K562 (cell line): ENCODE measurements at regions of chr11 and their contacts with region 1.

Region 1: GRCh38 chr11:60130496-60130895 is 42.0 kb downstream of the MS4A2 start:
- DNase-seq: peak; percentile 34 to 84 (median 53)
- ATAC-seq: peak; percentile 98
- H3K4me3 ChIP-seq: no peak overlapping the region
- H3K27ac ChIP-seq: no peak overlapping the region
- H3K4me1 ChIP-seq: peaks cover 0 to 12% of the 10 kb centered on the region in 2 experiments; a peak in 2 of 5 replicates
- H3K27me3 ChIP-seq: no peaks in the 10 kb centered on the region
- CTCF ChIP-seq: peak; percentile 67 to 76 (median 69)
- EP300 ChIP-seq: no peak; the same call in 1 of the 2 replicates
- POLR2A ChIP-seq: no peak
- RAD21 ChIP-seq: peak; percentile 97 to 99

Region 2: DNA sequence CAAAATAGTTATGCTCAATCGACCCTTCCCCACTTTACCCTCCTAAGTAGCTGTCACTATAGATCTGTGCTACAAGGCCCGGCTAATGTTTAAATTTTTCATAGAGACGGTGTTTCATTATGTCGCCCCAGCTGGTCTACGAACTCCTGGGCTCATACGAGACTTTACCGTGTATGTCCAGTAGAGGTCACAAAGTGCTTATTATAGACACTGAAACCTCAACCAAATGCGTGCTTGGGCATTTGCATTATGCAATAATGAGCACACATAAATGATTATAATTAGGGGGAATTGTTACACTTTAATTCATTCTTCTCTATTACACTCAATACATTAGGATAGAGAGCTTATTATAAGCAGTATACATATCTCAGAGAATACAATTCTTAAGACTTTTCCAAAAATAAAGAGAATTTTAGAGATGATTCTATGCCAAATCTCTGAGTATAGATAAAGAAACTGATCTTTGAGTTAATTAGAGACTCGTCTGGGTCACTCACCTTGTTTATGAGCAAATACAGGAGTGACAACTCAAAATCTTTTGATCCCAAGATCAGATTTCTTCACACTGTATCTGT is 307.4 kb before region 1 on chr11:
- CTCF ChIA-PET with region 1: interaction called, 16 read pairs
- POLR2A ChIA-PET with region 1: no interaction called
- in situ Hi-C with region 1: loop called (anchors 5 kb)
- intact Hi-C with region 1: loop called (anchors 1 kb)
- DNase-seq: peak; percentile 42 to 86 (median 52)
- ATAC-seq: peak; percentile 96
- H3K4me3 ChIP-seq: no peak overlapping the region
- H3K27ac ChIP-seq: no peak overlapping the region; the same call in 2 of the 3 replicates
- H3K4me1 ChIP-seq: peaks cover 0 to 2% of the 10 kb centered on the region in 2 experiments; a peak in 2 of 5 replicates
- H3K27me3 ChIP-seq: no peaks in the 10 kb centered on the region
- CTCF ChIP-seq: peak; percentile 78 to 87 (median 81)
- EP300 ChIP-seq: no peak
- POLR2A ChIP-seq: no peak
- RAD21 ChIP-seq: peak; percentile 96 to 98

Region 3: GRCh38 chr11:59918987-59919589 is 211.4 kb before region 1 on chr11:
- CTCF ChIA-PET with region 1: no interaction called
- POLR2A ChIA-PET with region 1: no interaction called
- in situ Hi-C with region 1: no loop called
- intact Hi-C with region 1: loop called (anchors 1 kb)
- DNase-seq: peak; percentile 34 to 74 (median 42)
- ATAC-seq: peak; percentile 71
- H3K4me3 ChIP-seq: no peak overlapping the region
- H3K27ac ChIP-seq: no peak overlapping the region
- H3K4me1 ChIP-seq: no peaks in the 10 kb centered on the region
- H3K27me3 ChIP-seq: no peaks in the 10 kb centered on the region
- CTCF ChIP-seq: peak; percentile 59 to 62 (median 61)
- EP300 ChIP-seq: no peak
- POLR2A ChIP-seq: no peak
- RAD21 ChIP-seq: peak; percentile 59 to 89

Region 4: DNA sequence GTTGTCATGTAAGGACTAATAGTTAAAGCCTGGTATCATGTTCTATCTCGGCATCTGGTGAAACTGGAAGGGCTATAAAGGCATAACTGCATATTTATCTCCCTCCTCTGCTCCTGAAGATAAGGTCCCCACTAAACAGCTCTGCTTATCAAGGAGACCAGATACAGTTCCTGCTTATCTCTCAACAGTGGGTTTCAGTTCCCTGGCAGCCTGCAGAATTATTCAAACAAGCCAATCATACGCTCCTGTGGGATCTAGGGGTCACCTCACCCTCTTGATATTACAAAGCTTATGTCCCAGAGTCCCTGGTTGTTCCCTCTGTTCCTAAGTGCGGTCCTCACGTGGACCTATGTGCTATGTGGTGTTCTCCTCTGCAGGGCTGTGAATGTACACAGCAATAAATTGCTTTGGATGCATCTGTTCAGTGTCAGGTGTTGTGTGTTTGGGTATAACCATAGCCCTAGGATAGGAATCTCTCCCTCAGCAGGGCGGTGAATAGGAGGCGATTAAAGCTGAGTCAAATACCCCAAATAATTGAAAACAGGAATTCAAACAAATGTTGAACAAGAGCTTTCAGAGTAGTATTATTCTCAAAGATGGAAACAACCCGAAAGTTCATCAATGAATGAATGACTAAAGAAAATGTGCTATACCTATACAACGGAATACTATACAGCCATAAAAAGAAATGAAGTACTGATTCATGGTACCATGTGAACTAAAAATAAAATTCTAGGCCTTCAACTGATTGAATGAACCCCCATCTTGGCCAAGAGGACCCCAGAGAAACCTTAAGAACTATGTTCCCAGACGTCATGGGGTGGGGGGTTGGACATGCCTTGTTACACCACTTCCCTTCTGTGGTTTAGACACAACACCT is 169.8 kb before region 1 on chr11:
- CTCF ChIA-PET with region 1: no interaction called
- POLR2A ChIA-PET with region 1: no interaction called
- in situ Hi-C with region 1: no loop called
- intact Hi-C with region 1: loop called (anchors 1 kb)
- DNase-seq: peak; percentile 84 to 90 (median 88)
- ATAC-seq: peak; percentile 88
- H3K4me3 ChIP-seq: no peak overlapping the region
- H3K27ac ChIP-seq: peak overlapping the region; percentile 90
- H3K4me1 ChIP-seq: peaks cover 0 to 25% of the 10 kb centered on the region in 2 experiments; a peak in 3 of 5 replicates
- H3K27me3 ChIP-seq: no peaks in the 10 kb centered on the region
- CTCF ChIP-seq: 0 out of 6 replicates have a peak, but pooled peaks of 1 of the 3 experiments have one; percentile 1
- EP300 ChIP-seq: peak; percentile 100
- POLR2A ChIP-seq: no peak
- RAD21 ChIP-seq: peak; percentile 34 to 47; a peak in 2 of 4 replicates

Region 5: GRCh38 chr11:60251485-60252212 is 121.2 kb after region 1 on chr11:
- CTCF ChIA-PET with region 1: no interaction called
- POLR2A ChIA-PET with region 1: no interaction called
- in situ Hi-C with region 1: no loop called
- intact Hi-C with region 1: loop called (anchors 5 kb)
- DNase-seq: peak; percentile 27 to 76 (median 36)
- ATAC-seq: peak; percentile 87
- H3K4me3 ChIP-seq: no peak overlapping the region
- H3K27ac ChIP-seq: no peak overlapping the region
- H3K4me1 ChIP-seq: no peaks in the 10 kb centered on the region
- H3K27me3 ChIP-seq: no peaks in the 10 kb centered on the region; a peak in 1 of 5 replicates
- CTCF ChIP-seq: peak; percentile 75 to 86 (median 85)
- EP300 ChIP-seq: no peak
- POLR2A ChIP-seq: no peak
- RAD21 ChIP-seq: peak; percentile 89 to 95